Activated CD8-positive, alpha-beta memory T cell treated with anti-CD3 and anti-CD28 coated beads, Interleukin-2, amount 10 ng/mL, durations not matched to agents 7 days and 5 days (primary cell): ENCODE measurements at regions of chrX and their contacts with region 1.

Region 1: DNA sequence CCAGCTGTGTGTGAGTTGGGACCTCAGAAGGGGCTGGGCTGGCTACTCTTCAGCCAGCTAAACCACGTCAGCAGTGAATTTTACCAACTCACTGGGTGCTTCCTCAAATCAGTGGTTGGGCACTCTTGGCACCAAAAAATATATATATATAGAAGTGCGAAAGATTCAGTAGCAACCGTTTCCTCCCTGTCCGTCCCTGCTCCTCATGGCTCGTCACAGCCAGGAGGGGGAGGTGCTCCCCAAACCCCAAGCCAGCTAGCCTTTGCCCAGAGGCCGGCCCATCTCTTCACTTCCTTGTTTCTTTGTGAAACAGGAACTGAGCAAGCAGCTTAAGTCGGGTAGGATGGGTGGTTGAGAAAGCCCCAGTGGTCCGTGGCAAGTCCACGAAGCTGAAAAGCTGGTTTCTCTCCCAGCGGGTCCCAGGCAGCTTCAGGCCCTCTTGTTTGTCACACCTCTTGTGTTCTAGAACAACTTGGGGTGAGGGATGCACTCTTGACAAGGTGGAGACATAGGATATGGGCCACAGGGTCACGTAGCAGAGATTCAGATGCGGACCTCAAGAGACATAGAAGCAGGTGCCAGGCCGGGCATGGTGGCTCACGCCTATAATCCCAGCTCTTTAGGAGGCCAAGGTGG is 6.8 kb upstream of the SASH3 start:
- DNase-seq: peak; percentile 82
- ATAC-seq: peak; percentile 38
- H3K4me3 Mint-ChIP-seq: peak overlapping the region; percentile 54
- H3K27ac Mint-ChIP-seq: peak overlapping the region; percentile 95
- H3K4me1 Mint-ChIP-seq: peaks cover 81% of the 10 kb centered on the region
- H3K27me3 Mint-ChIP-seq: no peaks in the 10 kb centered on the region

Region 2: GRCh38 chrX:129754056-129755024 is 18.6 kb before region 1 on chrX:
- CTCF ChIA-PET with region 1: interaction called, 66 read pairs
- DNase-seq: no peak
- ATAC-seq: no peak
- H3K4me3 Mint-ChIP-seq: no peak overlapping the region
- H3K27ac Mint-ChIP-seq: no peak overlapping the region
- H3K4me1 Mint-ChIP-seq: peaks cover 45% of the 10 kb centered on the region
- H3K27me3 Mint-ChIP-seq: no peaks in the 10 kb centered on the region

Region 3: DNA sequence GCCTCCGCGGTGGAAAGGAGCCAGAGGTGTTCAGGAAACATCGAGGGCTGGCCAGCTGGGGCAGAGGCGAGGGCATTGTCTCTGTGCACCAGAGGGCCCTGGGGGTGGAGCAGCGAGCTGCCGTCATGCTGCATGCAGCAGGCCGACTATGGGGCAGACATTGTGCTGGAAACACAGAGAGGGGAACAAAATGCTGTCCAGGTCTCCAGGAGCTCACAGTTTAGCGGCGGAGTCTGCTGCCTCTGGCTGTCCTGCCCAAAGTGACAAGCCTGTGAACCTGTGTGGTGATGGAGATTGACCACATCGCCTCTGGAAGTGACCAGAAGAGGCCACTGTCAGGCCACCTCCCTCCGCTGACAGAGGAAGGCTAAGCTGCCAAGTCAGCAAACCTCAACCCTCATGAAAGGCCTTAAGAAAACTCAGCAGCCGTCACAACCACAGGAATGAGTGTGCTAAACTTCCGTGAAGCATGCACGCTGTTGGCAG is 13.3 kb before region 1 on chrX:
- CTCF ChIA-PET with region 1: interaction called, 66 read pairs
- DNase-seq: peak; percentile 84
- ATAC-seq: peak; percentile 77
- H3K4me3 Mint-ChIP-seq: peak overlapping the region; percentile 39
- H3K27ac Mint-ChIP-seq: peak overlapping the region; percentile 87
- H3K4me1 Mint-ChIP-seq: peaks cover 66% of the 10 kb centered on the region
- H3K27me3 Mint-ChIP-seq: no peaks in the 10 kb centered on the region